Heart left ventricle (tissue), 16 donors: ENCODE measurements at regions of chr3 and their contacts with region 1.

Region 1: GRCh38 chr3:123096731-123097130 is 29.9 kb downstream of the PDIA5 start:
- DNase-seq: peak; percentile 70 to 88 (median 80)
- ATAC-seq: peak; percentile 82 to 94 (median 88)
- H3K4me3 ChIP-seq: no peak overlapping the region
- H3K27ac ChIP-seq: peak overlapping the region in 7 of 12 donors; percentile 27 to 76 (median 44)
- H3K4me1 ChIP-seq: peaks cover 0 to 40% (median 29%) of the 10 kb centered on the region in 12 donors
- H3K27me3 ChIP-seq: no peaks in the 10 kb centered on the region
- CTCF ChIP-seq: no peak
- POLR2A ChIP-seq: no peak

Region 2: GRCh38 chr3:123116111-123116510 is 19.4 kb after region 1 on chr3:
- intact Hi-C with region 1: loop called in 1 of 10 experiments (anchors 2 kb)
- DNase-seq: no peak
- ATAC-seq: no peak
- H3K4me3 ChIP-seq: no peak overlapping the region
- H3K27ac ChIP-seq: no peak overlapping the region
- H3K4me1 ChIP-seq: peaks cover 0 to 16% (median 9%) of the 10 kb centered on the region in 12 donors
- H3K27me3 ChIP-seq: no peaks in the 10 kb centered on the region
- CTCF ChIP-seq: no peak
- POLR2A ChIP-seq: no peak

Region 3: DNA sequence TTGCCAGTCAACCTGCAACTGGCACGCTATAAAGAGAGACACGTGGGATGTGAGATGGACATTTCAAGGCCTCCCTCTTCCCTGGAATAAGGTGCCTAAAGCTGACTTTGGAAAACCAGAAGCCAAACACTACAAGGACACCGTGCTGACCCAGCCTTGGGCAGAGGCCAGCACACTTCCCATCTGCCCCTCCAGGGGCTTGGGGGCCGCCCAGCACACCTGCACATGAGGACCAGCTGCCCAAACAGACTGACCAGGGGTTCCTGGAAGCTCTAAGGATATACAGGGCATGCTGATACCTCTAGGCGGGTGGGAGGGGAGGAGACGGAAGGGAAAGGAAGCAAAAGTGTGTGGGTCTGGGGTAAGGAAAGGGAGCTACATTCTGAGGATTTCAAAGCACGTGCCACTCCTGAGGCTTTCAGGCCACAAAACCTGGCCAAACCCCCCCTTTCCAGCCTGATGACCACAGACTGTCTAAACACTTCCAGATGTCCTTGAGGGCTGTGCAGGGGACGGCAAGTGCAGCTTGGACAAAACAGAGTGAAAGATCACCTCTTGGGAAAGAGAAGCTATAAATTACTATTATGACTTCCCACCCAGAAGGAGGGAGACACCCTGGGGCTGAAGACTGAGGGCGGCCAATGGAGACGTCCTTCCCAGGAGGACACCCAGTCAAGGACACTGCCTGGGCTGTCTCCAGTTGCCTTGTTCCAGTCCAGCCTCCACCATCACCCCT is 294.3 kb after region 1 on chr3:
- intact Hi-C with region 1: no loop called
- DNase-seq: peak in 3 of 5 donors; percentile 32 to 35 (median 33)
- ATAC-seq: peak in 2 of 4 donors; percentile 5 to 21
- H3K4me3 ChIP-seq: no peak overlapping the region
- H3K27ac ChIP-seq: peak overlapping the region; percentile 60 to 94 (median 88)
- H3K4me1 ChIP-seq: peaks cover 4 to 98% (median 62%) of the 10 kb centered on the region in 12 donors
- H3K27me3 ChIP-seq: no peaks in the 10 kb centered on the region
- CTCF ChIP-seq: no peak
- POLR2A ChIP-seq: no peak